Activated T-helper 1 cell treated with anti-CD3 and anti-CD28 coated beads, Interleukin-12 subunit alpha, Interleukin-12 subunit beta, Interleukin-2, Interleukin-4 antibody, amounts not matched to agents 30 ng/mL and 10 ng/mL and 1 ng/mL, durations not matched to agents 14 hours and 24 hours and 36 hours (primary cell): ENCODE measurements at regions of chr14 and their contacts with region 1.

Region 1: GRCh38 chr14:58297762-58298476 is 436 bp upstream of the ARID4A start:
- DNase-seq: peak; percentile 97
- H3K4me3 Mint-ChIP-seq: no peak overlapping the region
- H3K27ac Mint-ChIP-seq: no peak overlapping the region
- H3K4me1 Mint-ChIP-seq: peaks cover 53% of the 10 kb centered on the region
- H3K27me3 Mint-ChIP-seq: no peaks in the 10 kb centered on the region

Region 2: DNA sequence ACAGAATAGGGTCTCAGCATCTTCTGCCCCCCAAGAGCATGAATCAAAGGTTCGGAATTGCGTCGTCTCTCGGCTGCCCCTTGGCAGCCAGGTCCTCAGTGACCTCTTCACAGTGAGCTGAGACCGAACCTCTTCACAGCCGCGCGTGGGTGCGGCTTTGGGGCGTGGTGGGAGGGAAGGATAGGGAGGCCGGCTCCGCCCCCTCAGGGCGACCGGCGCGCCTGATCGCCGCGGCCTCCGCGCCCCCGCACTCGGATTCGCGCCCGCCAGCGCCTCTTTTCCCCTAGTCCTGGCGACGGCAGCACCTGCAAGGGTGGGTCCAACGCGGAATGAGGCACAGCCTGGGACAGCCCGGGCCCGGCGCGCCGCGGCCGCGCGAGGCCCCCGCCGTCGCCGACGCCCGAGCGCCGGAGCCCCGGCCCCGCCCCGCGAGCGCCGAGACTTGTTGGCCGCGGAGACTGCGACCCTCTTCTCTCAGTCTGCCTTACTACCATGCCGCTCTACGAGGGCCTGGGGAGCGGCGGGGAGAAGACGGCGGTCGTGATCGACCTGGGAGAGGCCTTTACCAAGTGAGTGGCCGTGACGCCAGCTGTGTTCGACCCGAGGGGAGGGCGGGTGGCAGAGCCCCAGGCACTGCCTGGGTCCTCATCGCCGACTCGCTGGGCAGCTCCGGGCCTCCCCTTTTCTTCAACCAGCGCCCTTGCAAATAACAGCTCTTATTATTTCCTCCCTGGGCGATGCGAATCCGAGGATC is 98.0 kb before region 1 on chr14 and contains the start of gene ACTR10:
- intact Hi-C with region 1: loop called (anchors 1 kb)
- DNase-seq: peak; percentile 80
- H3K4me3 Mint-ChIP-seq: peak within 1 kb of the TSS; percentile 93
- H3K27ac Mint-ChIP-seq: peak within 1 kb of the TSS; percentile 86
- H3K4me1 Mint-ChIP-seq: peaks cover 24% of the 10 kb centered on the region
- H3K27me3 Mint-ChIP-seq: peaks cover 1% of the 10 kb centered on the region
- total RNA-seq, gene ACTR10: 38.3 and 40.3 TPM in 2 replicates

Region 3: GRCh38 chr14:58280954-58281787 is 16.7 kb before region 1 on chr14:
- intact Hi-C with region 1: loop called (anchors 1 kb)
- DNase-seq: peak; percentile 19
- H3K4me3 Mint-ChIP-seq: peak overlapping the region; percentile 62
- H3K27ac Mint-ChIP-seq: peak overlapping the region; percentile 92
- H3K4me1 Mint-ChIP-seq: peaks cover 51% of the 10 kb centered on the region
- H3K27me3 Mint-ChIP-seq: no peaks in the 10 kb centered on the region

Region 4: GRCh38 chr14:58362798-58363412 is 65.0 kb after region 1 on chr14:
- intact Hi-C with region 1: loop called (anchors 2 kb)
- DNase-seq: no peak
- H3K4me3 Mint-ChIP-seq: no peak overlapping the region
- H3K27ac Mint-ChIP-seq: no peak overlapping the region
- H3K4me1 Mint-ChIP-seq: no peaks in the 10 kb centered on the region
- H3K27me3 Mint-ChIP-seq: no peaks in the 10 kb centered on the region

Region 5: DNA sequence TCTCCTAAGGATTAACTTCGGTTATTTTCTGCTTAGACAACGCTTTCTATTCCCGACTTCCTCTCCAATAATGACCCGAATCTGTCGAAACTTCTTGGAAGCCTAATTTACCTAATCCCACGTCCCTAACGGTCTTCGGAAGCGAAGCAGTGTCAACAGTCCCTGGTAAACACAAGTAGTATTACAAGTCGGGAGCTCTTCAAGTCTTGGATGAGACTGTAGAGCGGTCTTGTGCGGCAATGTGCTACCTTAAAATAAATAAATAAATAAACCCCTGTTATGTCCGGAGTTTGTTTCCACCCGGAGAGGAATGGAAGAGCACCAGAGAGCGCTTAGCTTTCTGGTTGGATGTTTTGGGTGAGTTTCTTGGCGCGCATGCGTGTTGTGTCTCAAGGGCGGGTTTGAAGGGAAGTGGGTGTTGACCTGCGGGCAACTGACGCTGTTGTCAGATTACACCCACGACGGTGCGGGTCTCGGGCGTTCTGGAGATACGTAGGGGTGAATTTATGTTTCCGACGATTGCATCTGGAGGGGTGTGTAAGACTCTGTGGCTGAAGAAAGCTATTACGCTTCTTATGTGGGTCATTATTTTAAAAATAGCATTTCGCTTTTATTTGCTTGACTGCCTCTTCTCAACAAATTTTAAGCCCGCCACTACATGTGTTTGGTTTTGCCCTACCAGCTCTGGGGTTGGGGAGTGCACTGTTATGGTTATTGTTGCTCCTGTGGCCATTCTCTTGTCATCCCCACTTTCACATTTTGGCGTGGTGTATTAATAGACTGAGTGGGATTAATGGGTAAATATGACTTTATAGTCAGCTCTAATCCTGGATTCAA is 129.6 kb after region 1 on chr14 and contains the starts of genes KIAA0586 and TIMM9:
- intact Hi-C with region 1: loop called (anchors 1 kb)
- DNase-seq: peak; percentile 95
- H3K4me3 Mint-ChIP-seq: peak within 1 kb of the TSS; percentile 86
- H3K27ac Mint-ChIP-seq: peak within 1 kb of the TSS; percentile 96
- H3K4me1 Mint-ChIP-seq: peaks cover 49% of the 10 kb centered on the region
- H3K27me3 Mint-ChIP-seq: no peaks in the 10 kb centered on the region
- total RNA-seq, gene KIAA0586: 19.7 and 19.8 TPM in 2 replicates
- total RNA-seq, gene TIMM9: 66.5 and 67.4 TPM in 2 replicates

Region 6: GRCh38 chr14:59483900-59484638 is 1186.2 kb after region 1 on chr14 and contains the starts of genes JKAMP and L3HYPDH:
- intact Hi-C with region 1: loop called (anchors 1 kb)
- DNase-seq: peak; percentile 95
- H3K4me3 Mint-ChIP-seq: peak within 1 kb of the TSS; percentile 94
- H3K27ac Mint-ChIP-seq: peak within 1 kb of the TSS; percentile 90
- H3K4me1 Mint-ChIP-seq: peaks cover 61% of the 10 kb centered on the region
- H3K27me3 Mint-ChIP-seq: no peaks in the 10 kb centered on the region
- total RNA-seq, gene JKAMP: 27.6 and 28.8 TPM in 2 replicates
- total RNA-seq, gene L3HYPDH: 14.0 and 15.9 TPM in 2 replicates